ENCODE measurements at regions of chr9 and their contacts with region 1.

Region 1: GRCh38 chr9:137046098-137046787 is at the start of gene NPDC1:
- DNase-seq: no peak
- H3K4me3 ChIP-seq: peak within 1 kb of the TSS; percentile 65
- CTCF ChIP-seq: peak; percentile 93

Region 2: GRCh38 chr9:137029058-137029936 is 16.9 kb before region 1 on chr9:
- CTCF ChIA-PET with region 1: interaction called, 39 read pairs
- POLR2A ChIA-PET with region 1: no interaction called
- DNase-seq: no peak
- H3K4me3 ChIP-seq: no peak overlapping the region; the same call in 1 of the 2 replicates
- CTCF ChIP-seq: peak; percentile 97

Region 3: DNA sequence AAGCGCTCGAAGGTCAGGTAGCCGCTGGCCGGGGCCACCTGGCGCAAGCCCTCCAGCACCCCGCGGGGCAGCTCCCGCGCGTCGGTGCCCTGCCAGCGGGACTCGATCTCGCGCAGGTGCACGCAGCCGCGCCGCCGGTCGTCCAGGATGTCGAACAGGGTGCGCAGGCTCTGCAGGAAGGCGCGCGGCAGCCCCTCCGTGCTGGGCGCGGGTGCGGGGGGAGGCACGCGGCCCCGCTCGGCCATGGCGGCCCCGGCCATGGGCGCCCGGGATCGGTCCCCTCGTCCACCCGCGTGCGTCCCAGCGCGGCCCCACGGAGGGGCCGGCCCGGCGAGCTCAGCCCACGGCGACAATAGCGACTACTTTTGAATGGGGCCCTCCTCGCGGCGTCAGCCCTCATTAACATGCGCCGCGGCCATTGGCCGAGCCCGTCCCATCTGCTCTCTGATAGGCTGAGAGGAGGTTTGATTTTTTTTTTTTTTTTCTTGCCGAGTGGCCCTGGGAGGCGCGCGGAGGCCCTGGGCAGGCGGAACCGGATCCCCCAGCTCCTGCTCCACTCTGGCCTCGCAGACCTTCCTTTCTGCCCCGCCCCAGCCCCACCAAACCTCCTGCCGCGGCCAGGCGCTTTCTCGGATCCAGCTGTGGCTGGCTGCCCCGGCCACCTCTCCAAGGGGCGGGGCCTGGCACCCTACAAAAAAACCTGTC is 24.1 kb after region 1 on chr9 and contains the start of gene SAPCD2:
- CTCF ChIA-PET with region 1: interaction called, 364 read pairs
- POLR2A ChIA-PET with region 1: no interaction called
- DNase-seq: no peak
- H3K4me3 ChIP-seq: peak within 1 kb of the TSS; percentile 53
- CTCF ChIP-seq: no peak

Region 4: DNA sequence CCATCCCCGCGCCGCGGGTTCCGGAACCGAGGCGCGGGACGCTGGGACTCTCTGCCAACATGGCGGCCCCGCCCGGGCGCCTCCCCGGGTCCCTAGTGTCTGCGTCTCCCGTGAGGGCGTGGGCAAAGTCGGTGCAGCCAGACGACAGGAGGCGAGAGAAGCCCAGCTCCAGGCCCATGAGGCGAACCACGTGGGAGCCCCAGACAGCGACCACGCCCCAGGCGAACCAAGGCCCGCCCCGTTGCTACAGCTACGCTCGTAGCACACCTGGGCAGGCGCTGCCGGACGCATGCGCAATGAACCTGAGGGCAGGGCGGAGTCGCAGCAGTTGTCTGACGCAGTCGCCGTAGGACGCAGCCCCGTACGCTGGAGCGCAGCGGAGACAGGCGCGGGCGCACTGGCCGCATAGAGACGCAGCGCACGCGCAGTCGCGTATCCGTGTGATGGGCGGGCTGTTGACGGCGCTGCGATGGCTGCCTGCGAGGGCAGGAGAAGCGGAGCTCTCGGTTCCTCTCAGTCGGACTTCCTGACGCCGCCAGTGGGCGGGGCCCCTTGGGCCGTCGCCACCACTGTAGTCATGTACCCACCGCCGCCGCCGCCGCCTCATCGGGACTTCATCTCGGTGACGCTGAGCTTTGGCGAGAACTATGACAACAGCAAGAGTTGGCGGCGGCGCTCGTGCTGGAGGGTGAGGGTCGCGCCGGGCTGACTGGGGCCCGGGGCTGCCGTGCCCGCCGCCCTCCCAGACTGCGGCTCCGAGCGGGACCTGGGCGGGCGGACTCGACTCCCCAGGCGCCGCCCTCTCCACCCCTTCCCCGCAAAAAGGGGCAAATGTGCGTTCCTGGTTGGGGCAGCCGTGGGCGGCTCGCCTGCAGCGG is 40.5 kb after region 1 on chr9 and contains the start of gene MAN1B1:
- CTCF ChIA-PET with region 1: interaction called, 20 read pairs
- POLR2A ChIA-PET with region 1: no interaction called
- DNase-seq: peak; percentile 85
- H3K4me3 ChIP-seq: peak within 1 kb of the TSS; percentile 78
- CTCF ChIP-seq: no peak

Region 5: DNA sequence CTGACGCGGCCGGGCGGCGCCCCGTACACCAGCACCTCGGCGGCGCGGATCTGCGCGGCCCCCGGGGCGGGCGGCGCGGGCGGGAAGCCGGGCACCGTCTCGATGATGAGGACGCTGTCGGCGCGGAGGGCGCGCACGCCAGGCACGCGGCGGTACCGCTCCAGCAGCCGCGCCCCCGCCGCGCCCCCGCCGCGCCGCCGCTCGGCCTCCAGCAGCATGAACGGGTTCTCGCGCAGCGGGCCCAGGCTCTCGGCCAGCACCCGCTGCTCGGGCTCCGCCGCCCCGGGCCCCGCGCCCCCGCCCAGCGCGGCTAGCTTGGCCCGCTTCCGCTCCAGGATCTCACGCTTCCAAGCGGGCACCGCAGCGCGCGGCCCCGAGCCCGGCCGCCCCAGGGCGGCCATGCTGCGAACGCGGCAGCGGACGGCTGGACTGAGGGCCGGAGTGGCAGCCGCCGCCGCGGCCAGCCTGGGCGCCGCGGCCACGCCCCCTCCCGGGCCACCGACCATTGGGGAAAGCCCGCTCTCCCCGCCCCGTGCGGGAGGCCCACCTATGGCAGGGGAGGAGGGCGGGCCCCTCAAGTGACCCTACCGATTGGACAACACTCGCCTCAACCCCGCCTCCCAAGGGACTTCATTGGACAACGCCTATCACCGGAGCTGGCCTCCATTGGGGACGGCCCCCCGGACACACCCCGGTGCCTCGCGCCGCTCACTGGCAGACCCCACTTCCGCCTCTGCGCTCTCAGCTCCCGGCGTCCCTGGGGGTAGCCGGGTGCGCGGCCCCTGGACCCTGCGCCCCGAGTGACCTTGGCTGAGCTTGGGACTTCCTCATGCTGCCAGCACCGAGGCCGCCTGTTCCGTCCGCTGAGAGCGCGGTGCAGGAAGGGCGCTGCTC is 154.3 kb after region 1 on chr9 and contains the start of gene TPRN:
- CTCF ChIA-PET with region 1: no interaction called
- POLR2A ChIA-PET with region 1: no interaction called
- DNase-seq: peak; percentile 89
- H3K4me3 ChIP-seq: peak within 1 kb of the TSS; percentile 79
- CTCF ChIP-seq: no peak